Thyroid gland (tissue), 4 donors: ENCODE measurements at regions of chr6 and their contacts with region 1.

Region 1: DNA sequence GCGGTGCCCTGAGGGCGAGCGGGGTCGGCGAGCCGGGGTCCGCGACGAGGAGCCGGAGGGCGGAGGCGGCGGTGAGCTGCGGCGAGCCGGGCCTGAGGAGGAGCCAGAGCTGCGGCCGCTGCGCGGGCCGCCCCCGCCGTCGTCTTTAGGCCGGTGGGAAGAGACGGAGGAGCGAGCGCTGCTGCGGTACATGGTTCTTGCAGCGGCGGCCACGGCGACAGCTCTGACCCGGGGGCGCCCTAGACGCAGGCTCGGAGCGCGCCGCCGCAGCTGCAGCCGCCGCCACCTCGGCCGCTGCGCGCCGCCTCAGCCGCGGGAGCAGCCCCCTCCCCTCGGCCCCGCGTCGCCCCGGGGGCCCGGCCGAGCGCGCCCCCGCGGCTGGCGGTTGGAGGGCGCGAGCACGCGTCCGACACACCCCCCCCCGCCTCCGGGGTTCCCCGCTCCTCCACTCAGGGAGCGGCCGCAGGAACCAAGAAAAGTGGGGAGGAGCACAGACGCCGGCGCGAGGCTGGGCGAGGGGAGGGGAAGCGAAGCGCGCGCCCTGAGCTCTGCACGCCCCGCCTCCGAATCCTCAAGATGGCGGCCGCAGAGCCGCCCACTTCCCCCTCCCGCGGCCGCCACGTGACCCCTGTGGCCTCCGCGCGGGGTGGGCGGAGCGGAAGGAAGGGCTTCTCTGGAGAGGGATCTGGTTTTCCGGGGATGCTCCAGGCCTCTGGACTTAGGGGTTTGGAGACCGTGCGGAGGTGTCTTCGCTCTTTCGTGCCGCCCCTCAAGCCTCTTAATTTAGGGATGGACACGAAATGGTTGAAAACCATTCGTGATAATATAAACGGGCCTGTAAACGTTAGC is at the start of gene ZNF318:
- DNase-seq: peak; percentile 97
- H3K4me3 ChIP-seq: peak within 1 kb of the TSS; percentile 56 to 69 (median 68)
- H3K27ac ChIP-seq: peak within 1 kb of the TSS; percentile 37 to 80 (median 68)
- H3K4me1 ChIP-seq: peaks cover 15 to 25% of the 10 kb centered on the region in 2 donors
- H3K27me3 ChIP-seq: no peaks in the 10 kb centered on the region
- CTCF ChIP-seq: no peak
- POLR2A ChIP-seq: peak in 1 of 2 donors; percentile 72
- total RNA-seq, gene ZNF318: 32.4 to 84.6 (median 37.5) TPM

Region 2: DNA sequence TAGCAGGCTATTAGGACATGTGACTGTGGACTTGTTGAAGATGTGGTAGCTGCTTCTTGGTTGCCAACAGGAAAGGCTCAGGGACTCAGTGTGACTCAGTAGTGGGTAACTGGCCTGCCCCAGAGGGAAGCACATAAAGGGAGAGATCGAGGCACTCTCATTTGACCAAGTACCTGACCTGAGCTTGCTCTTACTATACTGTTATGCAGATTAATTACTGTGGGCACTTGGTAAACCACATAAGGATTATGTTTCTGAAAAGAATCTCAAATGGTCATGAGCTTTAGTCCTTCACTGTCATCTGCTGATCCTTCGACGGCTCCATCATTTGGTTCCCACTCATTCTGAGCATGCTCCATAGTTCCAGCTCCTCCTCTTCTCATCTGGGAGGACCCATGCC is 538.2 kb before region 1 on chr6:
- intact Hi-C with region 1: no loop called
- DNase-seq: no peak
- H3K4me3 ChIP-seq: no peak overlapping the region
- H3K27ac ChIP-seq: no peak overlapping the region
- H3K4me1 ChIP-seq: no peaks in the 10 kb centered on the region
- H3K27me3 ChIP-seq: no peaks in the 10 kb centered on the region
- CTCF ChIP-seq: no peak
- POLR2A ChIP-seq: no peak

Region 3: GRCh38 chr6:43308101-43308989 is 61.1 kb before region 1 on chr6 and contains the start of gene CRIP3:
- intact Hi-C with region 1: no loop called
- DNase-seq: peak; percentile 54 to 57
- H3K4me3 ChIP-seq: peak within 1 kb of the TSS in 1 of 3 donors; percentile 21
- H3K27ac ChIP-seq: no peak within 1 kb of the TSS
- H3K4me1 ChIP-seq: peaks cover 9 to 12% of the 10 kb centered on the region in 2 donors
- H3K27me3 ChIP-seq: no peaks in the 10 kb centered on the region
- CTCF ChIP-seq: peak in 3 of 6 experiments; percentile 18 to 48 (median 46)
- POLR2A ChIP-seq: no peak
- total RNA-seq, gene CRIP3: 0.45 to 0.93 TPM in 2 of 4 donors, not detected in the others

Region 4: DNA sequence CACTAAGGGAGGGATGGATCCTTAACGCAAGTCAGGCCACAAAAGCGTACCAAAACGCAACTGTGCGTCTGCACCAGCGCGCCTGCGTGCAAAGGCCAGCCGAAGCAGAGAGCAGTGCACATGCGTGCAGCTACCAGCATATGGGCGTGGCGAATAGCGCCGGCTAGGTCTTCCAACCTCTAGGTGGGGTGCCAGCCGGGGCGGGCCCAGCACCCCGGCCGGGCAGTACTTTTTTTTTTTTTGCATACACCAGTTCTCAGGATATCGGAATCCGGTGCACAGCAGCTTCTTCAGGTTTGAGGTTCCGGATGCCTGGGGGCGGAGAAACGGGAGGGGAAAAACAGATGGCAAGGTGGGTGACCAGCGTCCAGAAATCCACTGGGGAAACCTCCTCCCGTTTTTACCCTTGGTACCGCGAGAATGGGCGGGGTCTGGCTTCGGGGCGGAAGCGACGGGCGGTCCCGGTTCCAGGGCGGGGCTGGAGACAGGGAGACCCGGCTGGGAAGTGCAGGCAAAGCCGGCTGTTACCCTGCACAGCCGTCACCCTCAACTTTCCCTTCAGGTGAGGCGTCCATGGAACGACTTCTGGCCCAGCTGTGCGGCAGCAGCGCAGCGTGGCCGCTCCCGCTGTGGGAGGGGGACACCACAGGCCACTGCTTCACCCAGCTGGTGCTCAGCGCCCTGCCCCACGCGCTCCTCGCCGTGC is 58.2 kb after region 1 on chr6 and contains the start of gene ABCC10:
- intact Hi-C with region 1: loop called (anchors 10 kb)
- DNase-seq: peak; percentile 96 to 97
- H3K4me3 ChIP-seq: peak within 1 kb of the TSS; percentile 67 to 91 (median 75)
- H3K27ac ChIP-seq: peak within 1 kb of the TSS; percentile 54 to 83 (median 81)
- H3K4me1 ChIP-seq: peaks cover 10 to 14% of the 10 kb centered on the region in 2 donors
- H3K27me3 ChIP-seq: no peaks in the 10 kb centered on the region
- CTCF ChIP-seq: peak in 3 of 6 experiments; percentile 32 to 44 (median 41)
- POLR2A ChIP-seq: peak; percentile 48 to 69
- total RNA-seq, gene ABCC10: 10.5 to 24.3 (median 19.3) TPM